Activated naive CD4-positive, alpha-beta T cell treated with anti-CD3 and anti-CD28 coated beads, Interleukin-2, amount 10 ng/mL, durations not matched to agents 7 days and 5 days (primary cell): ENCODE measurements at regions of chr2 and their contacts with region 1.

Region 1: GRCh38 chr2:20635675-20636584 is 15.0 kb downstream of the HS1BP3 start:
- DNase-seq: peak; percentile 53
- H3K4me3 Mint-ChIP-seq: no peak overlapping the region
- H3K27ac Mint-ChIP-seq: no peak overlapping the region
- H3K4me1 Mint-ChIP-seq: peaks cover 4% of the 10 kb centered on the region
- H3K27me3 Mint-ChIP-seq: no peaks in the 10 kb centered on the region

Region 2: DNA sequence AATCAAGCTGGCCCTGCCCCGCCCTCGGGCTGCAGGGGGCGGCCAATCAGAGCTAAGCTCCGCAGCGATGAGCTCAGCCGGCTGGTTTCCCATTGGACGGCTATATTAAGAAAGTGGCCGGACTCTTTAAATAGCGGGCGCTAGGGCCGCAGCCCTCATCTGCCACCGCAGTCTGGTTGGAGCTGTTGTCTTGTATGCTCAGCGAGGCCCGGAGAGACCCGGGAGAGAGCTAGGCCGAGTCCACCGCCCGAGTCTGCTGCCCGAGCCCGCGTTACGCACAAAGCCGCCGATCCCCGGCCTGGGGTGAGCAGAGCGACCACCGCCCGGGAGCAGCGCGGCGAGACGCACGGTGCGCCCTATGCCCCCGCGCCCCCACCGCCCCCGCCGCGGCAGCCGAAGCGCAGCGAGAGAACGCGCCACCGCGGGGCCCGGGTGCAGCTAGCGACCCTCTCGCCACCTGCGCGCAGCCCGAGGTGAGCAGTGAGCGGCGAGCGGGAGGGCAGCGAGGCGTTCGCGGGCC is 189.0 kb before region 1 on chr2 and contains the start of gene RHOB:
- CTCF ChIA-PET with region 1: interaction called, 65 read pairs
- DNase-seq: peak; percentile 92
- H3K4me3 Mint-ChIP-seq: peak within 1 kb of the TSS; percentile 73
- H3K27ac Mint-ChIP-seq: no peak within 1 kb of the TSS
- H3K4me1 Mint-ChIP-seq: peaks cover 6% of the 10 kb centered on the region
- H3K27me3 Mint-ChIP-seq: peaks cover 74% of the 10 kb centered on the region

Region 3: DNA sequence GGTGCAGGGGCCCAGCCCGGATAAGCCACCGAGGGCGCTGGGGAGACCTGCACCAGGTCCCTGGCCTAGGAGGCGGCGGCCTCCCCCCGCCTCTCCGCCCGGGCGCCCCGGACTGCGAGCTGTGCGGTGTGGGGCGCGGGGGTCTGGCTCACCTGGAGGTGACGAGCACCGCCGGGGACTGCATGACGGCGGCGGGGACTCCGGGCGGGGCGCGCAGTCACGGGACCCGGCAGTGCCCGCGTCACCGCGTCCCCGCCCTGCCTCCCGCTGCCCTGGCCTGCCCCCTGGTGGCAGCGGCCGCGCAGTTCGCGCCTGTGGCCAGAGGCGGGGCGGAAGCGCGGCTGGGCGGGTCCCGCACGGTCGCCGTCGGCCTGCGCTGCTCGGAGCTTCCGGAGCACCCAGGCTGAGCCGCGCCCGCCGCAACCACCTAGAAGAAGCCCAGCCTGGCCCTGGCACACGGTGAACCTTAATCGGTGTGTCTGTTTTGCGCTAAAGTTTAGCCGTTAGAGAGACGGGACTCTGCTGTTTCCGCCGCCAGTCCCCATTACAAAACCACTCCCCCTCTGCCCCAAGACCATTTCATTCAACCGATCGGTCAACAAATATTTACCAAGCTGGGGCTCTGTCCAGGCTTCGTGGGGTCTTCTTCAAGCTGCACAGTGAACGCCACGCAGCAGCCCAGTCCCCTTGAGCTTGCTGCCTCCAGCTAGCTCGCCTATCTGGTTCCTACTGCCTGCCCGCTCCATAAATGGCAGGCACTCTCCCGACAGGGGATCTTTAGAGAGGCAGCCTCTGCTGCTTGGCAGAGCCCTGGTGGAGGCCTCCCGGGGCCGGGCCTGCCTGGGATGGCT is 15.2 kb after region 1 on chr2 and contains the start of gene HS1BP3:
- CTCF ChIA-PET with region 1: interaction called, 24 read pairs
- DNase-seq: peak; percentile 87
- H3K4me3 Mint-ChIP-seq: peak within 1 kb of the TSS; percentile 87
- H3K27ac Mint-ChIP-seq: peak within 1 kb of the TSS; percentile 88
- H3K4me1 Mint-ChIP-seq: peaks cover 37% of the 10 kb centered on the region
- H3K27me3 Mint-ChIP-seq: peaks cover 18% of the 10 kb centered on the region

Region 4: GRCh38 chr2:20781656-20782265 is 145.8 kb after region 1 on chr2:
- CTCF ChIA-PET with region 1: no interaction called
- DNase-seq: peak; percentile 22
- H3K4me3 Mint-ChIP-seq: no peak overlapping the region
- H3K27ac Mint-ChIP-seq: no peak overlapping the region
- H3K4me1 Mint-ChIP-seq: no peaks in the 10 kb centered on the region
- H3K27me3 Mint-ChIP-seq: no peaks in the 10 kb centered on the region